Testis (tissue), 5 donors: ENCODE measurements at regions of chr16 and their contacts with region 1.

Region 1: DNA sequence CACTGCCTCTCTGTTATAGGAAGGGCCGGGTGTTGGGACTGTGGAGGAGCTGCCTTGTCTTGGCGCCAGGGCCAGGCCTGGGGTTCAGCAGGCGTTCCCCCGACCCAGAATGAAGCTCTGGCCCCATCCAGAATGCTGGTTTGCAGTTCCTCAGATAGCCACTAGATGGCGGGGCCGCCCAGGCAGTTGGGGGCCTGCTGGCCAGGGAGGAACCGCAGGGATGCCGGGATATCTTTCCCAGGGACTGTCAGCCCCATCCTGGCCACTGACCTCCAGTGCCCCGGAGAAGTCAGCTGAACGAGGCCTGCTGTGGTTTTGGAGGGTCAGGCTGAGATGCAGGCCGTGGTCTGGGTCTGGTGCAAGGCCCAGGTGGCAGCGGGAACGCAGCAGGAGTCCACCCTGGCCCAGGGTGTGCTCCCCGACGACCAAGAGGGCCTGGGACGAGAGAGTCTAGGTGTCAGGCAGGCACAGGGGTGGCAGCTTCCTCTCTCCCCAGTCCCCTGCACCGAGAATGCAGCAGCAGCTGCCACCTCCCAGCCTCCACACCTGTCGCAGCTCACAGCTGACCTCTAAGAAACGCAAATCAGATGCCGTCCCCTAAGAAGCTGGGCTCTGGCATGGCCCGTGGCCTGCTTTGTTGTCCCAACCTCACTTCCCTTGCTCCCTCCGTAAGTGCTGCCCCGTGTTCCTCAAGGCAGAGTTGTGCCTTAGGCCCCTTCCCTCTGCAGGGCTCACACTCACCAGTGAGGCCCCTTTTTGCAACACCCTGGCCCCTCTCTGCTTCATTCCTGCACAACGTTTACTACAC is 51.2 kb downstream of the RMI2 start:
- DNase-seq: peak; percentile 86
- H3K4me3 ChIP-seq: no peak overlapping the region
- H3K27ac ChIP-seq: no peak overlapping the region
- H3K4me1 ChIP-seq: peaks cover 10% of the 10 kb centered on the region
- H3K27me3 ChIP-seq: no peaks in the 10 kb centered on the region
- CTCF ChIP-seq: peak; percentile 96 to 99 (median 98)
- POLR2A ChIP-seq: no peak

Region 2: DNA sequence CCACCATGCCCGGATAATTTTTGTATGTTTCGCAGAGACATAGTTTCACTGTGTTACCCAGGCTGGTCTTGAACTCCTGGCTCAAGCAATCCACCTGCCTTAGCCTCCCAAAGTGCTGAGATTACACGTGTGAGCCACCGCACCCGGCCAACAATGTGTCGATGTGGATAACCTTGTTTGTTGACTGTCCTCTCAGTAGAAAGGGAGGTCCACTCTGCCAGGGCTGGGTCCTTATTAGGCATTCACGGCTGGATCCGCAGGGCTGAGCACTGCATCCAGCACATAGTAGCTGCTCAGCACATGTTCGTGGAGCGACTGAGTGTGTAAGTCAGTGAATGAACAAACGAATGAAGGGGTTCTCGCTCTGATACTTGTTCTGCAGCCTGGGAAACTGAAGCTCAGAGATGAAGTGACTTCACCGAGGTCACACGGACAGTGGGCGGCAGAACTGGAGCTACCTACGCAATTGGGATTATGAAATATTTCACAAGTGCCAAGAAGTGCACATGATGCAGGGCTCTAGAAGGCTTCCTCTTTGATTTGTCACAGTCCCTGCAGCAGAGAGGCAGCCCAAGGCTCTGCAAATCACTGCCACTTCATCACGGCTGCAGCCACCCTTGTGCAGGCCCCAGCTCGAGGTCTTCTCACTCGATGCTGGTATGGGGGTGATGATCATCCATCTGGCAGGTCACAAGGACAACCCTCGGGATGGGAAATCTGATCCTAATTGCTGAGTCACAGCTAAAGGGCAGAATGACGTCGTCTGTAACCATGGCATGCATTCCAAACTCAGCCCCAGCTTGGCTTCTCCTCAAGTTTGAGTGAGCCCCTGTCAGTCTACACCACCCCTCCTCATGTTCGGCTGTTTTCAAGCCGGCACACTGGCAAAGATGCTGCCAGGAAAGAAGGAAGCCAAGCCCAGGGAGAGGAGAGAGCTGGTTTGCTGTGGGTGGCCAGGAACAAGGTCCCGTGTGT is 243.8 kb after region 1 on chr16:
- intact Hi-C with region 1: loop called (anchors 5 kb)
- DNase-seq: peak; percentile 82
- H3K4me3 ChIP-seq: no peak overlapping the region
- H3K27ac ChIP-seq: peak overlapping the region; percentile 59 to 92
- H3K4me1 ChIP-seq: peaks cover 19% of the 10 kb centered on the region
- H3K27me3 ChIP-seq: no peaks in the 10 kb centered on the region
- CTCF ChIP-seq: no peak
- POLR2A ChIP-seq: no peak

Region 3: DNA sequence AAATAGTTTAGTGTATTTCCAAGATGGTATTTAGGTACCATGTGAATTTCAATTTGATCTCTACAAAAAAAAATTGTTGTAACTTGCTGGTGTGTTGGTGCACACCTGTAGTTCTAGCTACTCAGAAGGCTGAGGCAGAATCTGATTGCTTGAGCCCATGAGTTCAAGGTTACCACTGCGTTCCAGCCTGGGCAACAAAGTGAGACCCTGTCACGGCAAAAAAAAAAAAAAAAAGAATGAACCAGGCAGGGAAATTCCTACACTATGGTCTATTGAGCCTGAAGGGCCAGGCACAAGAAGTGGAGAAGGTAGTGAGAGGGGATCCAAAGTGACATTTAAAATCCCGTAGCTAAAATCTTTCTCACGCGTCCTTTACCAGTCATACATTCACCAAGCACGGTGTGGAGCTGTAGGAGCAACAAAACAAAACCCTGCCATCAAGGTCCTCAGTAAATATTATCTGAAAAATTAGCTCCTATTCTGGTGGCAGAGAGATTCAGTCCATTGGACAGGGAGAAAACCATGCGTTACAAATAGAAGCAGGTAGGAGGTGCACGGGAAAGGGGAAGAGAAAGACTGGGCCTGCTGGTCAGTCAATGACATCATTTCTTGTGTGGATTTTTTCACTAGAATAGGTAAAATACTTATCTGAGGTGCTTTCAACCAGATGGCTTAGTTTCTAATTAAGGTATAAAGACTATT is 319.0 kb after region 1 on chr16:
- intact Hi-C with region 1: loop called (anchors 10 kb)
- DNase-seq: no peak
- H3K4me3 ChIP-seq: no peak overlapping the region
- H3K27ac ChIP-seq: no peak overlapping the region
- H3K4me1 ChIP-seq: no peaks in the 10 kb centered on the region
- H3K27me3 ChIP-seq: no peaks in the 10 kb centered on the region
- CTCF ChIP-seq: no peak
- POLR2A ChIP-seq: no peak

Region 4: DNA sequence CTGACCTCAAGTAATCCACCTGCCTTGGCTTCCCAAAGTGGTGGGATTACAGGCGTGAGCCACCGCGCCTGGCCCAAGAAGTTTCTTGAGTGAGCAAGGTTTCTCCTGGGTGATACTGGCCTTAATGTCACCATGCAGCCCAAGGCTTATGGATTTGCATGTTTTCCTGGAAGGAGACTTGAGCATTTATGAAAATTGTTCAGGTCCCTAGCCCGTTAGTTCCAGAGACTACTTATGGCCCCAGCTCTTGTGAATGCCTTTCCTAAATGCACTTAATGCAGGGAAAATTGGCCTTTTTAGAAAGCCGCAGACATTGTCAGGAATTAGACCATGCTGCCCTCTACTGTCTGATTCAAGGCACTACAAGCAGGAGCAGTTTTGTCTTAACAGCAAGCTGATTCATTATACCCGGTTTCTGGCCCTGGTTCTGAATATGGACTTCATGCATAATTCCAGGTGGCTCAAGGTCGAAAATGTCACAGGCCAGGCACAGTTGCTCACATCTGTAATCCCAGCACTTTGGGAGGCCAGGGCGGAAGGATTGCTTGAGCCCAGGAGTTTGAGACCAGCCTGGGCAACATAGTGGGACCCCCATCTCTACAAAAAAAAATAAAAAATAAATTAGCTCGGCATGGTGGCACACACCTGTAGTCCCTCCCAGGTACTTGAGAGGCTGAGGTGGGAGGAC is 671.4 kb after region 1 on chr16:
- intact Hi-C with region 1: loop called (anchors 10 kb)
- DNase-seq: peak; percentile 68
- H3K4me3 ChIP-seq: no peak overlapping the region
- H3K27ac ChIP-seq: no peak overlapping the region
- H3K4me1 ChIP-seq: no peaks in the 10 kb centered on the region
- H3K27me3 ChIP-seq: no peaks in the 10 kb centered on the region
- CTCF ChIP-seq: peak; percentile 84 to 96 (median 95)
- POLR2A ChIP-seq: no peak